GM12878 (cell line): ENCODE measurements at regions of chr3 and their contacts with region 1.

Region 1: GRCh38 chr3:6567241-6567640 is 293.7 kb upstream of the GRM7 start:
- DNase-seq: no peak
- ATAC-seq: no peak
- H3K4me3 ChIP-seq: no peak overlapping the region
- H3K27ac ChIP-seq: no peak overlapping the region
- H3K4me1 ChIP-seq: no peaks in the 10 kb centered on the region
- H3K27me3 ChIP-seq: no peaks in the 10 kb centered on the region
- CTCF ChIP-seq: no peak
- EP300 ChIP-seq: no peak
- POLR2A ChIP-seq: no peak
- RAD21 ChIP-seq: no peak

Region 2: DNA sequence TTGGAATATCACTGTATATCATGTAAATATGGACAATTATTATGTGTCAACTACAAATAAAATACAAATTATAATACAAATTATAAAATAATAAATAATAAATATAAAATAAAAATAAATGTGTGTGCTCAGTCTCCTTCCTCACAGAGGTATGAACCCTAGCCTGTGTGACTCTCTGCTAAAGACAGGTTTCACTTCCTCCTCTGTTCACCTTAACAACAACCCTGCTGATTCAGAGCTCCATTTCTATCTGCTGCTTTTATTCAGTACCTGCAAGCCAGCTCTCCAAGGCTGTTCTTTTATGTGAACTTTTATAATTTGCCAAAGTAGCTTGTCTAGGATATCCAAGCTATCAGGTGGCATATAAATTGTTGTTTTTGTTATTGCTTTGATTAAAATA is 317.1 kb before region 1 on chr3:
- CTCF ChIA-PET with region 1: no interaction called
- POLR2A ChIA-PET with region 1: no interaction called
- RAD21 ChIA-PET with region 1: no interaction called
- SMC1A ChIA-PET with region 1: no interaction called
- in situ Hi-C with region 1: no loop called
- intact Hi-C with region 1: no loop called
- DNase-seq: no peak
- ATAC-seq: peak; percentile 100
- H3K4me3 ChIP-seq: no peak overlapping the region
- H3K27ac ChIP-seq: 0 out of 2 replicates have a peak overlapping the region, but pooled peaks have one; percentile 24
- H3K4me1 ChIP-seq: peaks cover 3% of the 10 kb centered on the region; the same call in 1 of the 2 replicates
- H3K27me3 ChIP-seq: no peaks in the 10 kb centered on the region
- CTCF ChIP-seq: no peak
- EP300 ChIP-seq: 0 out of 4 replicates have a peak, but pooled peaks of 1 of the 2 experiments have one; percentile 32
- POLR2A ChIP-seq: no peak
- RAD21 ChIP-seq: 0 out of 2 replicates have a peak, but pooled peaks have one; percentile 9

Region 3: DNA sequence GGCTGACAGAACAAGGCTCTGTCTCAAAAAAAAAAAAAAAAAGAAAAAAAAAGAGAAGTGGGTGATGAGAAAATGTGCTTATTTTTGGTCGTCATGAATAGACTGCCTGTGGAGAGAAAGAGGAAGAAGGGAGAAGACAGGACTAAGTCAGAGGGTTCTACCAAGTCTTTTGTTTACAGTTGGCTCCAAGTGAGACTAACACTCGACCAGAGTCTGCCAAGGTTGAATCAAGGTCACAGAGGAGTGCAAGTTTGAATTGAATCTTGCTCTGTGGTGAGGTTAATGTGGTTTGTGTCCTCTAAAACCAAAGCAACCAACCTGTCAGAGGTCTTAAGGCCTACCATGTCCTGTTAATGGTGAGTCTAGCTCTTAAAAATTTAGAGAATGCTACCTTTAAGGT is 40.4 kb before region 1 on chr3:
- CTCF ChIA-PET with region 1: no interaction called
- POLR2A ChIA-PET with region 1: no interaction called
- RAD21 ChIA-PET with region 1: no interaction called
- SMC1A ChIA-PET with region 1: no interaction called
- in situ Hi-C with region 1: no loop called
- intact Hi-C with region 1: no loop called
- DNase-seq: peak; percentile 24
- ATAC-seq: peak; percentile 58
- H3K4me3 ChIP-seq: no peak overlapping the region
- H3K27ac ChIP-seq: no peak overlapping the region
- H3K4me1 ChIP-seq: no peaks in the 10 kb centered on the region
- H3K27me3 ChIP-seq: no peaks in the 10 kb centered on the region
- CTCF ChIP-seq: no peak
- EP300 ChIP-seq: no peak
- POLR2A ChIP-seq: no peak
- RAD21 ChIP-seq: no peak

Region 4: GRCh38 chr3:6551165-6551564 is 16.1 kb before region 1 on chr3:
- CTCF ChIA-PET with region 1: no interaction called
- POLR2A ChIA-PET with region 1: interaction called, 3 read pairs
- RAD21 ChIA-PET with region 1: no interaction called
- SMC1A ChIA-PET with region 1: interaction called, 14 read pairs
- in situ Hi-C with region 1: no loop called
- intact Hi-C with region 1: no loop called
- DNase-seq: no peak
- ATAC-seq: no peak
- H3K4me3 ChIP-seq: no peak overlapping the region
- H3K27ac ChIP-seq: no peak overlapping the region
- H3K4me1 ChIP-seq: no peaks in the 10 kb centered on the region
- H3K27me3 ChIP-seq: no peaks in the 10 kb centered on the region
- CTCF ChIP-seq: no peak
- EP300 ChIP-seq: no peak
- POLR2A ChIP-seq: no peak
- RAD21 ChIP-seq: no peak